PC-3 (cell line): ENCODE measurements at regions of chr10 and their contacts with region 1.

Region 1: DNA sequence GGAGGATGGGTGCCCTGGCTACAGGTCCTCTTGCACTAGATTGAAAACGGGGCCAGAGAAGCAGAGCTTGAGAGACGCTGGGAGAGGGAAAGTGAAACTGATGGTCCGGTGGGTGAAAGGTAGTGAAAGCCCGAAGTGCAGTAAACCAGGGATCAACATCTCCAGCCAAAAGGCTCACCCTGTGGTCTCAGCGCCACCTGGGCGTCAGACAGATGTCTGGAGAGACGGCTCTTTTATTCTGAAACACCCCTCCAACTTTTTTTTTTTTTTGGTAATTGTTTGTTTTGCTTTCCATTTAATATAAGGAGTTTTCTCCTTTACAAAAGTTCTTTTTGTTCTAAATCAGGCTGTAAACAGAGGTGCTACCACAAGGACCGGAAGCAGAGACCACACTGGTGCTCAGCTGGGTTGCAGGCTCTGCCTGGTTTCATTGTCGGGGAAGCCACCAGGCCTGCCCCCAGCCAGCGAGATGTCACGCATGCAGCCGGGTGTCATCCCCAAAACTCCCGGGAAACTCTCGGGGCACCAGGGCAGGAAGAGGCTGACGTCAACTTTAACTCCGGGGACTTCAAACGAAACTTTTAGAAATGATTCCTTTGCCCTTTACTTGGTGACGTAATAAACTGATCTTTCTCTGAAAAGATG is 11.2 kb downstream of the IL2RA start:
- DNase-seq: peak; percentile 44
- ATAC-seq: peak; percentile 83
- H3K4me3 ChIP-seq: peak overlapping the region; percentile 66
- H3K27ac ChIP-seq: no peak overlapping the region
- H3K4me1 ChIP-seq: peaks cover 6% of the 10 kb centered on the region; the same call in 1 of the 2 replicates
- H3K27me3 ChIP-seq: peaks cover under 1% of the 10 kb centered on the region; the same call in 1 of the 2 replicates
- CTCF ChIP-seq: peak; percentile 43; the same call in 1 of the 2 replicates

Region 2: DNA sequence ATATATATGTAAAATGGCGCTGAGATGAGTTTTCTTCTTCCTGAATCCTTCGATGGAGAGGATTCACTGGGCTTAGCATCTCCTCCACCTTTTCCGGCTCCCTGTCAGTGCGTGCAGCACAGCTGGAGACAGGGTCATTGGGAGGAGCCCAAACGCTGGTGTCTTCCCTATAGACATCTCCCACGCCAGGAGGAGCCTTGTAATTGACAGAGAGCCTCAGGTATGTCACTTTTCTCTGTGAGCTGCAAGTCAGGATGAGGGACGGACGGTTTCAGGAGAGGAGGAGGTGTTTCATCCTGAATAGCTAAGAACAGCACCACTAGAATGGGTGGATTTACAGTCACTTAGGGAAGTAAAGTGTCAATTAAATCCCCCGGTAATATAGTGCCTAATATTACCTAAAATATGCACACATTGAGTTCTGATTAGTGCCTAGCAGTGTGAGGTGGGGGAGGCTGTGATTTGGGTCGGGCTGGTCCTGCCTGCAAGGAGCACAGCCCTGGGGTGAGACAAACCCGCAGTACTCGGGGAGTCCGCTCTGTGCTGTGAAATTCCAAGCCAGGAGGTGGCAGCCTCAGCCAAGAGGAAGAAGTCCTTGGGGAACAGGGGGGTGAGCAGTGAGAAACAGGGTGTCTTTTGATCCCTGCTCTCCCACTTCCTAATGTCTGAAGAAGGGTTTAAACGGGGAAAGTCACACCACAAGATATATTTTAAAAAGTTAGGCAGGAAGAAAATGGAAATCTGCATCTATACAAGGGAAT is 101.7 kb before region 1 on chr10:
- CTCF ChIA-PET with region 1: interaction called, 3 read pairs
- POLR2A ChIA-PET with region 1: no interaction called
- intact Hi-C with region 1: loop called (anchors 2 kb)
- DNase-seq: peak; percentile 54
- ATAC-seq: peak; percentile 42
- H3K4me3 ChIP-seq: no peak overlapping the region
- H3K27ac ChIP-seq: no peak overlapping the region
- H3K4me1 ChIP-seq: peaks cover 30% of the 10 kb centered on the region
- H3K27me3 ChIP-seq: no peaks in the 10 kb centered on the region
- CTCF ChIP-seq: peak; percentile 61

Region 3: DNA sequence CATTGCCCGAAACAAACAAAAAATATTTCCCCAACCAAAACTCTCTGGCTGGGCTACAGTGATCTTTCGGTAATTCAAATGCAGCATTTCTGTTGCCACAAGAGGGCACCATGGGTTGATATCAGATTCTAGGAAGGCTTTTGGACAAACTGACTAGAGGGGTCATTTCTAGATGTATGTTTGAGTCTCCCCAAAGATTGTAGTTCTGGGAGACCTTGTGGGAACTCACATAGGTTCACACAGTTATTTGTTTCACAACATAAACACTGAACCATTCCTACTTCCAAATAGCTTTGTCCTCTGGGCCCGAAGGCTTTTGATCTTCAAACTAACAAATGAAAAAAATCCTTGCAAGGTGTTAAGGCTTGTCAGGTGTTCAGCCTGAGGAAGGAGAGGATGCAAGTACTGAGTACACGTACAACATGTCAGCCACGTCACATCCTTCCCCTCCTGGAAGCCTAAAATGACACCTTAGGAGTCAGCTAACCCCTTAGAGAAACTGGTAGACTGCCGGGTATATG is 36.6 kb before region 1 on chr10:
- CTCF ChIA-PET with region 1: no interaction called
- POLR2A ChIA-PET with region 1: no interaction called
- intact Hi-C with region 1: loop called (anchors 5 kb)
- DNase-seq: peak; percentile 59
- ATAC-seq: peak; percentile 81
- H3K4me3 ChIP-seq: peak overlapping the region; percentile 40
- H3K27ac ChIP-seq: no peak overlapping the region
- H3K4me1 ChIP-seq: no peaks in the 10 kb centered on the region
- H3K27me3 ChIP-seq: no peaks in the 10 kb centered on the region
- CTCF ChIP-seq: peak; percentile 67